Right cardiac atrium (tissue), 5 donors: ENCODE measurements at regions of chr11 and their contacts with region 1.

Region 1: DNA sequence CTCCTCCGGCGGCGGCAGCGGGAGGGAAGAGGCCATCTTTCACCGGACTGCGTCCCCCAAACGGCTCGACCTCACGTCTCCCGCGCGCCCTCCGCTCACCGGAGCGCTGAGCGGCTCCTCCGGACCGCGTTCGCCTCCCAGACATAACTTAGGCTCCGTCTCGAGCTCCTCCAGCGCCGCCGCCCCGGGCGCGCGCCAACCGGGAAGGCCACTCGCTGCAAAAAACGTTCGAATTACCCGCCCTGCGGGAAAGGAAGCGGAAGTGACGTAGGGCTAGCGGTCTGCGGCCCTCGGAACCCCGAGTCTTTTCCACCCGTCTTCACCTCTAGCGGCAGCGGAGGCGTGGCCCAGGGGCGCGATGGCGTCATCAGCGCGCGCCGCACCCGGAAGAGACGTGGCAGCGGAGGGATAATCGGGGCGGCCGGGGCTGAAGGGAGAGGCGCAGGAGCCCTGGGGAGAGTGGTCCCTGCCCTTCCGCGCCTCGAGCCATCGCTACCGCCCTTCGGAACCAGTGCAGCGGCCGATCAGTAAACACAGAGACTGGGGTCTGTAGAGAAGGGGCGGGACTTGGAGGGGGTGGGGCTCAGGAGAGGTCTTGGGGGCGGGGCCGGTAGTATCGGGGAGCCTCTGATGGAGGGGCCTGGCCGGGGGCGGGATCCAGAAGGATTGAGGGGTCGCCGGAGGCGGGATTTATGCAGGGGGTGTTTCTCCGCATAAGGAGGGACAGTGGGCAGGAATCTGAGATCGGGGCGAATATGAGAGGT is at the starts of genes CDCA5 and ZFPL1:
- DNase-seq: peak; percentile 95 to 98 (median 98)
- ATAC-seq: peak; percentile 95 to 97
- H3K4me3 ChIP-seq: peak within 1 kb of the TSS; percentile 88
- H3K27ac ChIP-seq: peak within 1 kb of the TSS; percentile 81
- H3K4me1 ChIP-seq: peaks cover 2% of the 10 kb centered on the region
- H3K27me3 ChIP-seq: no peaks in the 10 kb centered on the region
- total RNA-seq, gene CDCA5: 0.22 to 1.6 (median 1.3) TPM
- total RNA-seq, gene ZFPL1: 25.6 to 27.3 (median 26.3) TPM

Region 2: GRCh38 chr11:65013692-65014145 is 70.3 kb before region 1 on chr11:
- intact Hi-C with region 1: loop called in 1 of 4 experiments (anchors 10 kb)
- DNase-seq: peak; percentile 94 to 98 (median 98)
- ATAC-seq: peak; percentile 93 to 95
- H3K4me3 ChIP-seq: peak overlapping the region; percentile 58
- H3K27ac ChIP-seq: peak overlapping the region; percentile 90
- H3K4me1 ChIP-seq: no peaks in the 10 kb centered on the region
- H3K27me3 ChIP-seq: no peaks in the 10 kb centered on the region

Region 3: GRCh38 chr11:65047581-65048422 is 36.2 kb before region 1 on chr11:
- intact Hi-C with region 1: loop called in 1 of 4 experiments (anchors 5 kb)
- DNase-seq: peak; percentile 46 to 84 (median 78)
- ATAC-seq: peak; percentile 59 to 73
- H3K4me3 ChIP-seq: peak overlapping the region; percentile 66
- H3K27ac ChIP-seq: no peak overlapping the region
- H3K4me1 ChIP-seq: no peaks in the 10 kb centered on the region
- H3K27me3 ChIP-seq: no peaks in the 10 kb centered on the region

Region 4: DNA sequence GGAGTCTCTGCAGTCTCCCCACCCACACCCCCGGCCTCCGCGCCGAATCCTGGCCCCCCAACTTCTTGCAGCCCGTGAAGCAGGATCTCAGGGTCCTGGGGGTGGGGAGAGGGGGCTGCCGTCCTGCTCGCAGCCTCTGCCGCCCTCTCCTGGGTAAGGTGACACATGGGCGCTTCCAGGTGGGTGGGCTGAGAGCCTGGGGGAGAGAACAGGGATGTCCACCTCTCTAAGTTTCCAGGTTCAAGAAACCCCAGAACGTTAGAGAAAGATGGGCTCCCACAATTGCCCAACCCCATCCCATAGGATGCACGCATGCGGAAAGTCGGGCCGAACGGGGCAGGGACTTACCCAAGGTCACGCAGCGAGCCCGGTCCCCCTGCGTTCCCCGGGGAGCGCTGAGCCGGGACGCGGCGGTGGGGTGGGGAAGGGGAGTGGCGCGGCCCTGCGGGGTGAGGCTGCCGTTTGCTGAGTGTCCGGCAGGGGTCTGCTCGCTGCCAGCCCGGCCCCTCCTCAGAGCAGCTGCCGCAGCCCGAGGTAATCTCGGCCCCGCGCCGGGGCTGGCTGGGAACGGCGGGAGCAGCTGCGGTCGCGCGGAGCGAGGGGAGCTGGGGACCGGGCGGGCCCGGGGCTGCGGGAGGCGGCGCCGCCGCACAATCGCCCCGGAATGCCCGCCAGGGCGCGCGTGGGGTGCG is 97.0 kb after region 1 on chr11:
- intact Hi-C with region 1: no loop called
- DNase-seq: peak; percentile 72 to 90 (median 86)
- ATAC-seq: peak; percentile 67 to 68
- H3K4me3 ChIP-seq: peak overlapping the region; percentile 85
- H3K27ac ChIP-seq: peak overlapping the region; percentile 76
- H3K4me1 ChIP-seq: no peaks in the 10 kb centered on the region
- H3K27me3 ChIP-seq: no peaks in the 10 kb centered on the region

Region 5: DNA sequence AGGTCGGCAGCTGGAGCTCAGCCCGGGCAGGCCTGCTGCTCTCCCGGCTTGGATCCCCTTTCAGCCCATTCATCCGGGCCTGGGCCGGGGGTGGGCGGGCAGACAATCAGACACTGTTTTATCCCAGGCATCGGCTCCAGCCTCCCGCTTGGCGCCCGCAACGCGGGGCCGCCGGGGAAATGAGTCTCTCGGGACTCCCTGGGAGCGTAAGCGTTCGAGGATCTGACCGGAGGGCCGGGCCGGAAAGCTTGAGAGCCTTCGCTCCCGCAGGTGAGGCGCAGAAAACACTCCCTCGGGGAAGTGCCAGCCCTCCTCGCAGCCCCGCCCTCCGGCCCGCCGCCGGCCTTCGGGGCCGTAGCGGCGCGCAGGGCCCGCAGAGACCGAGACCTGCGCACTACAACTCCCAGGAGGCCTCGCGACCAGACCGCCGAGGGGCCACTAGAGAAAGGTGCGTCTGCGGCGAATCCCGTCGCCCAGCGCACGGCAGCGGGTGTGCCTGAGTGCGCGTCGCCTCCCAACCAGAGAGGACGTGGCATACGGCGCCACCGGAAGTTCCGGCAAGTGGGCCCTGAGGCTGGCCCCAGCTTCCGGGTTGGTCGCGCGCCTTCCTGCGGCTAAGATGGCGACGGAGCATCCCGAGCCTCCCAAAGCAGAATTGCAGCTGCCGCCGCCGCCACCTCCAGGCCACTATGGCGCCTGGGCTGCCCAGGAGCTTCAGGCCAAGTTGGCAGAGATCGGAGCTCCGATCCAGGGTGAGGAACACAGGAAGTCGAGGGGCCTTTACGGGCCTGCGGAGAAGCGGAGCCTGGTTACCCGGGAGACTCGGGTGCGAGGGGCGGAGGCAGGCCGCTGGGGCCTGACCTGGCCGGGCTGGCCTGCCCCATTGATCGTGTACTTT is 968.0 kb after region 1 on chr11 and contains the start of gene SF3B2:
- intact Hi-C with region 1: no loop called
- DNase-seq: peak; percentile 99
- ATAC-seq: peak; percentile 96 to 98
- H3K4me3 ChIP-seq: peak within 1 kb of the TSS; percentile 72
- H3K27ac ChIP-seq: peak within 1 kb of the TSS; percentile 82
- H3K4me1 ChIP-seq: peaks cover 7% of the 10 kb centered on the region
- H3K27me3 ChIP-seq: no peaks in the 10 kb centered on the region
- total RNA-seq, gene SF3B2: 84.4 to 97.7 (median 91.7) TPM